Esophagus squamous epithelium (tissue), 5 donors: ENCODE measurements at regions of chr13 and their contacts with region 1.

Region 1: DNA sequence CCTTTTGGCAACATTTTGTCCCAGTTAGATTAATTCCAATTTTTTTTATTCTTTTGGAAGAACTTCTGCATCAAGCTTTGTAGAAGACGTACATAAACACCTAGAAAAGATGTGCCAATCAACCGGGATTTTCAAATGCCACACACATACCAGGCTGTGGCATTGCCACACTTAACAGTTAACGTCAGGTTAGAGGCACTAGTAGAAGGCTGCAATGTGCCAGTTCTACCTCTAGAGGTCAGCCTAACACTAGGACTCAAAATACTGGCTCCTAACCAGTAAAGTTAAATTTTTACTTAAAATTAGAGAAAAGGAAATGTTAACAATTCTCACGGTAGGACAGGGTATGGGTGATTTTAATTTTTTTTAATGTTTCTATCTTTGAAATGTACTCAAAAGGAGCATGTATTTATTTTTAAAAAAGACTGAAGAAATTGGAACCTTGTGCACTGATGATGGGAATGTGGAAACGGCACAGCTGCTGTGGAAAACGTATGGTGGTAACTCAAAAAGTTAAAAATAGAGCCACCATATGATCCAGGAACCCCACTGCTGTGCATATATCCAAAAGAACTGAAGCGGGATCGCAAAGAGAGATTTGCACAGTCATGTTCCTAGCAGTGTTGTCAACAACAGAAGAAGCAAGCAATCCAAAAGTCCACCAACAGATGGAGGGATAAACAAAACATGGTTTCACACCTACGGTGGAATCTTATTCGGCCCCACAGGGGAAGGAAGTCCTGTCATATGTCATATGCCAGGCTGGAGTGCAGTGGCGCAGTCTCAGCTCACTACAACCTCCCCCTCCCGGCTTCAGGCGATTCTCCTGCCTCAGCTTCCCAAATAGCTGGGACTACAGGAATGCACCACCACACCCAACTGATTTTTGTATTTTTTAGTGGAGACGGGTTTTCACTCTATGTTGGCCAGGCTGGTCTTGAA is 30.3 kb downstream of the CRYL1 start:
- DNase-seq: no peak
- H3K4me3 ChIP-seq: peak overlapping the region in 1 of 4 donors; percentile 28
- H3K27ac ChIP-seq: peak overlapping the region in 1 of 4 donors; percentile 21
- H3K4me1 ChIP-seq: peaks cover 0 to 31% (median 8%) of the 10 kb centered on the region in 3 donors
- H3K27me3 ChIP-seq: no peaks in the 10 kb centered on the region
- CTCF ChIP-seq: peak; percentile 38 to 96 (median 94)
- POLR2A ChIP-seq: no peak

Region 2: GRCh38 chr13:20264271-20265018 is 230.9 kb before region 1 on chr13:
- intact Hi-C with region 1: no loop called
- DNase-seq: no peak
- H3K4me3 ChIP-seq: no peak overlapping the region
- H3K27ac ChIP-seq: no peak overlapping the region
- H3K4me1 ChIP-seq: no peaks in the 10 kb centered on the region
- H3K27me3 ChIP-seq: no peaks in the 10 kb centered on the region
- CTCF ChIP-seq: no peak
- POLR2A ChIP-seq: no peak

Region 3: GRCh38 chr13:20703780-20704445 is 208.6 kb after region 1 on chr13:
- intact Hi-C with region 1: loop called (anchors 10 kb)
- DNase-seq: peak; percentile 15
- H3K4me3 ChIP-seq: peak overlapping the region; percentile 44 to 86 (median 61)
- H3K27ac ChIP-seq: peak overlapping the region in 3 of 4 donors; percentile 54 to 87 (median 83)
- H3K4me1 ChIP-seq: peaks cover 4 to 27% (median 7%) of the 10 kb centered on the region in 3 donors
- H3K27me3 ChIP-seq: peaks cover 0 to 33% (median 0%) of the 10 kb centered on the region in 4 donors
- CTCF ChIP-seq: peak in 5 of 6 experiments; percentile 25 to 79 (median 70)
- POLR2A ChIP-seq: peak in 1 of 4 donors; percentile 33

Region 4: GRCh38 chr13:20828539-20829364 is 333.4 kb after region 1 on chr13:
- intact Hi-C with region 1: loop called (anchors 10 kb)
- DNase-seq: no peak
- H3K4me3 ChIP-seq: peak overlapping the region in 2 of 4 donors; percentile 11 to 37
- H3K27ac ChIP-seq: peak overlapping the region; percentile 2 to 68 (median 50)
- H3K4me1 ChIP-seq: peaks cover 0 to 14% (median 0%) of the 10 kb centered on the region in 3 donors
- H3K27me3 ChIP-seq: no peaks in the 10 kb centered on the region
- CTCF ChIP-seq: peak; percentile 67 to 82 (median 79)
- POLR2A ChIP-seq: no peak

Region 5: DNA sequence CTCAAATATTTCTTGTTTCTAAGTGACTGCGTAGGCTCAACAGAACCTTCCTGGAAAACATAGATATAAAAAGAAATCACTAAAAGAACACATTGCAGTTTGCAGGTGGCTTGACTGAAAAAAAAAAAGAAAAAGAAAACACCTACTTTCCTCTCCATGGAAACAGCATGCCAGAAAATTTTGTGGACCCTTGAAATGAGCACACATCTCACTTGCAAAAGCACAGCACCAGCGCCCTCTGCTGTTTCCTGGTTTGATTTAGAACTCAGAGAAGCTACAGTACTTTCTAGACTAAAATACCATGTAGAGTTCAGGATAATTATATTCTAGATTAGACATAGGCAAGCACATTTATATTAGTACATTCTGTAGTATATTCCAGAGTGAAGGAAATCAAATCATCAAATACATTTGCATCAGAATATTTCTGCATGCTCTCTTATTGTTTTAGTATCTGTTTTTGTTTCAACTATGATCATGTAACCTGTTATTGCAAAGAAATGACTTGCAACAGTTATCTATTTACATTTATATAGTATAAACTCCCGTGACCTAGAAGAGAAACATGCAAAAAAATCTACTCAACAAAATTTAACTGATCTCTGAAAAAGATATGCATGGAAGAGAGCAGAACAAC is 429.5 kb after region 1 on chr13:
- intact Hi-C with region 1: loop called (anchors 10 kb)
- DNase-seq: peak; percentile 9
- H3K4me3 ChIP-seq: no peak overlapping the region
- H3K27ac ChIP-seq: no peak overlapping the region
- H3K4me1 ChIP-seq: no peaks in the 10 kb centered on the region
- H3K27me3 ChIP-seq: no peaks in the 10 kb centered on the region
- CTCF ChIP-seq: peak; percentile 19 to 75 (median 57)
- POLR2A ChIP-seq: no peak